Activated CD4-positive, alpha-beta T cell treated with anti-CD3 and anti-CD28 coated beads, Interleukin-2, amount 10 ng/mL, durations not matched to agents 24 days and 14 days (primary cell): ENCODE measurements at regions of chr3 and their contacts with region 1.

Region 1: DNA sequence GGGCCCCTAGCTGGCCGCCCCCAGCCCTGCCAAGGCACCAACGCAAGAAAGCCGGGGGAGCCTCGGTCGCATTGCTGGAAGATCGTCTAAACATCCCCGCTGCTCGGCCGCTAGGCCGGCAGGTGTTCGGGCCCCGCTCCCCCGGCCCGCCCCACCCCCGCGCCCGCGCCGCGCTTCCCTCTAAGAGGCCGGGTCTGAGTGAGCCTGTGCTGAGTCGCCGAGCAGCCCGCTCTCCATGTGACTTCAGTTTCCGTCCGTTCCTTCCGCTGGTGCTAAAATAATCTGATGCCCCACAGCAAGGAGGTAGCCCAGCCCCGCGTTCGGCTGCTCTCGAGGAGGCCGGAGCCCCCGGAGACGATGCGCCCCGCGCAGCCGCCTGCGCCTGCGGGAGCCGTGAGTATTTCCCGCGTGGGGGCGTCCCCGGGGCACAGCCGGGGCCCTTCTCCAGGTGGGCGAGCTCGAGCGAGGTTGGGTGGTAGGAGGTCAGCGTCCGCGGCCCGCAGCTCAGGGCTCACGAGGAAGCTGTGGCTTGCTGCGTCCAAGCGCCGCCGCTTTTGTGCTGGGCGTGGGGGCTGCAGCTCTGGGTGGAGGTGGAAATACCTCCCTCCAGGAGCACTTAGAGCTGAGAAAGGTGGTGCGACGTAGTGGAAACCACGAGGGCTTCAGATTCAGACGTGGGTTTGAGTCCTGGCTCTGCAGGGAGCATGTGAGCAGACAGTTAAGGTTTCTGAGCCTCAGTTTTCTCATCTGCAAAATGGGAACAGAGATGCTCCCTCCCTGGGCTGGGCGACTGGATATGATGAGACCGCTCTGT is at the start of gene NRROS:
- DNase-seq: peak; percentile 89
- H3K4me3 Mint-ChIP-seq: peak within 1 kb of the TSS; percentile 86
- H3K27ac Mint-ChIP-seq: peak within 1 kb of the TSS; percentile 94
- H3K4me1 Mint-ChIP-seq: peaks cover 53% of the 10 kb centered on the region
- H3K27me3 Mint-ChIP-seq: no peaks in the 10 kb centered on the region
- total RNA-seq, gene NRROS: 38.2 and 39.0 TPM in 2 replicates

Region 2: DNA sequence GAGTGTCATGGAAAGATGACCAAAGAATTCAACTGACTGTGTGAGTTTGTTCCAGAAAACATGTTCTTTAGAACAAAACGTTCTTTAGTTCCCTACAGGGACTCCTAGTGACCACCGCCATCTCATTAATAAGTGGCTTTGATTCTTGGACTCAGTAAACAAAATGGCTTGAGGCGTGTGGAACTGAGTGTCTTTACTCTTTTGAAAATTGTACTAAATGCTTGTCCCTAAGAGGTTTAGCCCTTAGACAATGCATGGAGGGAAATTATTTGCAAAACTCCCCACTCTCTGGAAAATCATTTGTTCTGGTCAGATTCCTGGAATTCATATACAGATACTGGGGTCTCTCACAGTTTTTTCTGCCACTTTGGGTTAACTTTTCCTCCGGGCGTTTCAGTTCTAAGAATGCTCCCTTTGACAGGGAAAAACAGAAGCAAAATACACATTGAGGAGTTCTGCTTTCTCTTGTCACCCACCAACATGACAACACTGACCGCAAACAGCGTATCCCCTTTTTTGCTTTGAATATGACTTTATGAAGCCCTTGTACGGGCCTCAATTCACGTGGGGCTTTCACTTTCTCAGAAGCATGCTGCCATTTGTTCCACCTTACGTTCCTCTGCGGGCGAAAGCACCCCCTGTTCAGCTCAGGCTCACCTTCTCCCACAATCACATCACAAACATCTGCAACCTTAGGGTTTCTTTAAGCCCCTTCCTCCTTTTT is 15.5 kb before region 1 on chr3:
- intact Hi-C with region 1: loop called (anchors 1 kb)
- DNase-seq: peak; percentile 82
- H3K4me3 Mint-ChIP-seq: peak overlapping the region; percentile 68
- H3K27ac Mint-ChIP-seq: peak overlapping the region; percentile 68
- H3K4me1 Mint-ChIP-seq: peaks cover 27% of the 10 kb centered on the region
- H3K27me3 Mint-ChIP-seq: no peaks in the 10 kb centered on the region

Region 3: DNA sequence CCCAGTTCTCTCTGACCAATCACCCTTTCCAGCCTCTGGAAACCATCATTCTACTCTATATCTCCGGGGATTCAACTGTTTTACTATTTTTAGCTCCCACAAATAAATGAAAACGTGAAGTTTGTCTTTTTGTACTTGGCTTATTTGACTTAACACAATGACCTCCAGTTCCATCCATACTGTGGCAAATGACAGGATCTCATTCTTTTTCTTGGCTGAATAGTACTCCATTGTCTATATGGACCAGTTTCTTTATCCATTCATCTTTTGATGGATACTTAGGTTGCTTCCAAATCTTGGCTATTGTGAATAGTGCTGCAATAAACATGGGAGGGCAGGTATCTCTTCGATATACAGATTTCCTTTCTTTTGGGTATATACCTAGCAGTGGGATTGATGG is 33.9 kb after region 1 on chr3:
- intact Hi-C with region 1: no loop called
- DNase-seq: no peak
- H3K4me3 Mint-ChIP-seq: no peak overlapping the region
- H3K27ac Mint-ChIP-seq: no peak overlapping the region
- H3K4me1 Mint-ChIP-seq: peaks cover 30% of the 10 kb centered on the region
- H3K27me3 Mint-ChIP-seq: peaks cover 2% of the 10 kb centered on the region

Region 4: GRCh38 chr3:196684548-196685407 is 45.1 kb after region 1 on chr3:
- intact Hi-C with region 1: loop called (anchors 2 kb)
- DNase-seq: peak; percentile 91
- H3K4me3 Mint-ChIP-seq: peak overlapping the region; percentile 48
- H3K27ac Mint-ChIP-seq: peak overlapping the region; percentile 49
- H3K4me1 Mint-ChIP-seq: peaks cover 20% of the 10 kb centered on the region
- H3K27me3 Mint-ChIP-seq: no peaks in the 10 kb centered on the region

Region 5: DNA sequence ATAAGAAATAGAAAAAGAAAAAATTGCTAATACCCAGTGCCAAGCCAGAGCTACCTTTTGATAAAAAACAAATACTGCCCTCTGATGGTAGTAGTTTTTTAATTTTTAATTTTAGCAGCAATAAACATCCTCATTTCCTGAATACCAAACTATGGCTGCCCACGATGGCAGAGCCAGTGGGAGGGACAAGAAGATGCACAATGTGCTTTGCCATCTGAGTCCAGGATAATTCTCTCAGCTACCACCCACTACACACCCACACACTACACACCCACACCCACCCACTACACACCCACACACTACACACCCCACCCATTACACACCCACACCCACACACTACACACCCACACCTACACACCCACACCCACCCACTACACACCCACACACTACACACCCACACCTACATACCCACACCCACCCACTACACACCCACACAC is 54.5 kb after region 1 on chr3:
- intact Hi-C with region 1: loop called (anchors 2 kb)
- DNase-seq: peak; percentile 63
- H3K4me3 Mint-ChIP-seq: no peak overlapping the region
- H3K27ac Mint-ChIP-seq: peak overlapping the region; percentile 89
- H3K4me1 Mint-ChIP-seq: peaks cover 17% of the 10 kb centered on the region
- H3K27me3 Mint-ChIP-seq: peaks cover 5% of the 10 kb centered on the region

Region 6: GRCh38 chr3:196739671-196740480 is 100.2 kb after region 1 on chr3 and contains the start of gene PAK2:
- intact Hi-C with region 1: loop called (anchors 2 kb)
- DNase-seq: peak; percentile 97
- H3K4me3 Mint-ChIP-seq: peak within 1 kb of the TSS; percentile 96
- H3K27ac Mint-ChIP-seq: peak within 1 kb of the TSS; percentile 98
- H3K4me1 Mint-ChIP-seq: peaks cover 22% of the 10 kb centered on the region
- H3K27me3 Mint-ChIP-seq: no peaks in the 10 kb centered on the region
- total RNA-seq, gene PAK2: 81.1 and 92.5 TPM in 2 replicates